ENCODE measurements at regions of chr9 and their contacts with region 1.

Region 1: DNA sequence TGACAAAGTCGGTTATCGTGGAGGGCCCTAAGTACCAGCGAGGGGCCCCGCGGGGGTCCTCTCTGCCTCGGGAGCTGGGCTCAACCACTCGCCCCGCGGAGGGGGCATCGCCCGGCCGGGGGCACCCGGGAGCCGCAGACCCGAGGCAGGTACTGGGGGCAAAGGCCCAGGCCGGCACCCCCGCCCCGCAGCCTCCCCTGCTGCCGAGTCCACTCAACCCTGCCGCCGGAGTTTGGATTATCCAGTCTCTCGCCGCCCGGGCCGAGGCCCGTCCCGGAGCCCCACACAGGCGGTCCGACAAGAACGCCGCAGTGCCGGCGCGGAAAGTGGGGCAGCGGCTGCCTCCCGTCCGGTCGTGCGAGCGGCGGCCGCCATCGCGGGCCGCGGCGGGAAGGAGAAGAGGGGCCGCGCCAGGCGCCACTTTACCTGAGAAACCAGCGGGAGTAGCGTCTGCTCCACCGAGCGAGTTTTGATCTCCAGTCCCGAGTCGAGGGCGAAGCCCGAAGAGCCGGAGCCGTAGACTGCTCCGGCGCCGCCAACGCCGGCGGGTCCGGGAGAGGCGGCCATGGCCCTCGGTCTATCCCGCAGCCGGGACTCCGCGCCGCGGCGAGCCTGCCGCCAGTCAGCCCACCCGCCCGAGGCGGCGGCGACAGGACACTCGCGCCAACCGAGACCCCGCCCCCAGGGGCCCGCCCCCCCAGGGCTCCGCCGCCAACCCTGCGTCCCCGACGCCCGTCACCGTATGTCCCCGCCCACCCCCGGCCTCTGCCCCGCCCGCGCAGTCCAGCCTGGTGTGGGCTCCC is at the start of gene CTNNAL1:
- DNase-seq: peak; percentile 95 to 100 (median 99)
- ATAC-seq: peak; percentile 94
- H3K4me3 ChIP-seq: peak within 1 kb of the TSS; percentile 81
- H3K27ac ChIP-seq: peak within 1 kb of the TSS; percentile 86
- H3K4me1 ChIP-seq: peaks cover 20 to 33% of the 10 kb centered on the region in 2 experiments; a peak in 4 of 5 replicates
- H3K27me3 ChIP-seq: no peaks in the 10 kb centered on the region
- CTCF ChIP-seq: no peak
- EP300 ChIP-seq: no peak
- POLR2A ChIP-seq: peak; percentile 82
- RAD21 ChIP-seq: no peak
- polyA plus RNA-seq, gene CTNNAL1: 23.2 to 29.8 TPM

Region 2: DNA sequence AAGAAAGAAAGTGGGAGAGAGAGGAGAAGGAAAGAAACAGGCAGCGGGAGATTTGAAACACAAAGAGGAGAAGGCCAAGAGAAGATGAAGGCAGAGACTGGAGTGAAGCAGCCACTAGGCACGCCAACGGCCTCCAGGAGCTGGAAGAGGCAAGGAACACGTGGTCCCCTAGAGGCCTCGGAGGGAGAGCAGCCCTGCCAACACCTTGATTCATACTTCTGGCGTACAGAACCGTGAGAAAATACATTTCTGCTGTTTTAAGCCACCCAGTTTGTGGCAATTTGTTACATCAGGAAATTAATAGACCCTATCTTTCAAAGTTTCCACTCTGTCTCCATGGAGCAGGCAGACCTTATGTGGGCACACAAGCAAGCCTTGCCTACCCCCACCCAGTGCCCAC is 290.7 kb before region 1 on chr9:
- CTCF ChIA-PET with region 1: no interaction called
- POLR2A ChIA-PET with region 1: no interaction called
- in situ Hi-C with region 1: no loop called
- intact Hi-C with region 1: no loop called
- DNase-seq: no peak
- ATAC-seq: no peak
- H3K4me3 ChIP-seq: no peak overlapping the region
- H3K27ac ChIP-seq: no peak overlapping the region
- H3K4me1 ChIP-seq: no peaks in the 10 kb centered on the region
- H3K27me3 ChIP-seq: peaks cover 0 to 5% of the 10 kb centered on the region in 2 experiments; a peak in 1 of 5 replicates
- CTCF ChIP-seq: no peak
- EP300 ChIP-seq: no peak
- POLR2A ChIP-seq: no peak
- RAD21 ChIP-seq: no peak

Region 3: GRCh38 chr9:108933718-108934322 is 79.3 kb before region 1 on chr9 and contains the start of gene ELP1:
- CTCF ChIA-PET with region 1: no interaction called
- POLR2A ChIA-PET with region 1: no interaction called
- in situ Hi-C with region 1: no loop called
- intact Hi-C with region 1: loop called (anchors 5 kb)
- DNase-seq: peak; percentile 90 to 97 (median 92)
- ATAC-seq: peak; percentile 95
- H3K4me3 ChIP-seq: peak within 1 kb of the TSS; percentile 86
- H3K27ac ChIP-seq: peak within 1 kb of the TSS; percentile 79
- H3K4me1 ChIP-seq: peaks cover 0 to 12% of the 10 kb centered on the region in 2 experiments; a peak in 4 of 5 replicates
- H3K27me3 ChIP-seq: no peaks in the 10 kb centered on the region
- CTCF ChIP-seq: peak; percentile 48 to 61 (median 57)
- EP300 ChIP-seq: 0 out of 2 replicates have a peak, but pooled peaks have one; percentile 19
- POLR2A ChIP-seq: peak; percentile 83
- RAD21 ChIP-seq: peak; percentile 37 to 45
- polyA plus RNA-seq, gene ELP1: 17.0 to 25.0 TPM

Region 4: GRCh38 chr9:108994695-108995094 is 18.4 kb before region 1 on chr9:
- CTCF ChIA-PET with region 1: no interaction called
- POLR2A ChIA-PET with region 1: interaction called, 15 read pairs
- in situ Hi-C with region 1: no loop called
- intact Hi-C with region 1: no loop called
- DNase-seq: peak in 2 of 4 experiments; percentile 17 to 50
- ATAC-seq: peak; percentile 86
- H3K4me3 ChIP-seq: no peak overlapping the region
- H3K27ac ChIP-seq: peak overlapping the region; percentile 66; the same call in 2 of the 3 replicates
- H3K4me1 ChIP-seq: peaks cover 0 to 10% of the 10 kb centered on the region in 2 experiments; a peak in 2 of 5 replicates
- H3K27me3 ChIP-seq: no peaks in the 10 kb centered on the region
- CTCF ChIP-seq: no peak
- EP300 ChIP-seq: no peak
- POLR2A ChIP-seq: no peak
- RAD21 ChIP-seq: no peak

Region 5: DNA sequence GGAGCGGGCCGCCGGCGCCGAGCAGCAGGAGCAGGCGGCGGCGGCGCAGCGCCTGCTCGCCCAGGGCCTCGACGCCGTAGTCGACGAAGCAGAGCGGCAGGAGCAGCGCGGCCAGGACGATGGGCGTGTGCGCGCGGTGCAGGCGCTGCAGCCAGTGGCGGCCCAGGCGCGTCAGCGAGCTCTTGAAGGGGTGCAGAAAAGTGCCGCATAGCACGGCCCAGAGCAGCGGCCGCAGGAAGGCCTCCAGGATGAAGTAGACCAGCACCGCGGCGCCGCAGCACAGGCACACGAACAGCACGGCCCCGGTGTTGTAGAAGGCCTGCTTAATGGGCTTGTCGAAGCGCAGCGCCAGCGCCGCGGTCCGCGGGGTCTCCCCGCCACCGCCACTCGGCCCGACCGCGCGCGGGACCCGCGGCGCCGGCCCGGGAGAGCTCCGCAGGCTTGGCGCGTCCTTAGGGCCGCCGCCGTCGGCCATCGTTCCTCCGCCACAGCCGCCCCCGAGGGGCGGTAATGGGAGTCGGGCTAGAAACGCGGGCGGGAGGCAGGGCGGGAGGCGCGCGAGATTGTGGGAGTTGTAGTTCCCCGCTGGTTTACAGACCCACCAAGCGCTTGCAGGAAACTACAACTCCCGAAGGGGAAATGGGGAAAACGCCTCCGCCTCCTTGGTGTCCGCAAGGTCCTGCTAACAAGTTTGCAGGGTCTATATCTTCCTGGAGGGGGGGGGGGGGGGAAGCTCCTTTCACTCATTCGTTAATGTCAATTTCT is 106.5 kb after region 1 on chr9 and contains the start of gene TMEM245:
- CTCF ChIA-PET with region 1: no interaction called
- POLR2A ChIA-PET with region 1: no interaction called
- in situ Hi-C with region 1: no loop called
- intact Hi-C with region 1: loop called (anchors 5 kb)
- DNase-seq: peak; percentile 84 to 99 (median 88)
- ATAC-seq: peak; percentile 89
- H3K4me3 ChIP-seq: peak within 1 kb of the TSS; percentile 90
- H3K27ac ChIP-seq: peak within 1 kb of the TSS; percentile 87
- H3K4me1 ChIP-seq: peaks cover 34 to 53% of the 10 kb centered on the region in 2 experiments
- H3K27me3 ChIP-seq: no peaks in the 10 kb centered on the region
- CTCF ChIP-seq: 0 out of 6 replicates have a peak, but pooled peaks of 1 of the 3 experiments have one; percentile 23
- EP300 ChIP-seq: no peak
- POLR2A ChIP-seq: no peak; the same call in 1 of the 2 replicates
- RAD21 ChIP-seq: no peak; a peak in 1 of 4 replicates
- polyA plus RNA-seq, gene TMEM245: 8.5 to 12.1 TPM

Region 6: DNA sequence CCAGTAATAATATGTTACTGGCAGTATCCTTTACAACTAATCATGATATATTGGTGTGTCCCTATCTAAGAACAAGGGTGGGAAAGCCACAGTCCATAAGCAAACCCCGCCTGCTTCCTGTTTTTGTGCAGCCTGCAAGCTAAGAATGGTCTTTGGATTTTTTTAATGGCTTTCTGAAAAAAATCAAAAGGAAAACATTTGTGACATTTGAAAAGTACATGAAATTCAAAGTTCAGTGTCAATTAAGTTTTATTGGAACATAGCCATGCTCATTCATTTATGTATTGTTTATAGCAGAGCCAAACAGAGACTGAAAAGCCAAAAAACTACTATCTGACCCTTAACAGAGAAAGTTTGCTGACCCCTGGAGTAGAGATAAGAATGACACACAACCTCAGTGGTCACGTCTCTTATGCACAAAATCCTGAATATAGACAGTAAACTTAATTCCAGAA is 119.5 kb after region 1 on chr9:
- CTCF ChIA-PET with region 1: no interaction called
- POLR2A ChIA-PET with region 1: interaction called, 3 read pairs
- in situ Hi-C with region 1: no loop called
- intact Hi-C with region 1: loop called (anchors 5 kb)
- DNase-seq: peak; percentile 35 to 71 (median 45)
- ATAC-seq: peak; percentile 78
- H3K4me3 ChIP-seq: no peak overlapping the region
- H3K27ac ChIP-seq: peak overlapping the region; percentile 63
- H3K4me1 ChIP-seq: peaks cover 7 to 40% of the 10 kb centered on the region in 2 experiments; a peak in 4 of 5 replicates
- H3K27me3 ChIP-seq: no peaks in the 10 kb centered on the region
- CTCF ChIP-seq: peak in 2 of 3 experiments; percentile 24 to 46; a peak in 3 of 6 replicates
- EP300 ChIP-seq: peak; percentile 80
- POLR2A ChIP-seq: no peak
- RAD21 ChIP-seq: peak; percentile 39 to 66; a peak in 3 of 4 replicates